Pancreas (tissue), 10 donors: ENCODE measurements at regions of chr3 and their contacts with region 1.

Region 1: GRCh38 chr3:124351430-124352148 is 359.7 kb upstream of the ROPN1 start:
- DNase-seq: peak in 3 of 6 donors; percentile 14 to 34 (median 26)
- ATAC-seq: peak; percentile 53 to 91 (median 87)
- H3K4me3 ChIP-seq: no peak overlapping the region
- H3K27ac ChIP-seq: no peak overlapping the region
- H3K4me1 ChIP-seq: no peaks in the 10 kb centered on the region
- H3K27me3 ChIP-seq: no peaks in the 10 kb centered on the region
- CTCF ChIP-seq: peak in 2 of 4 donors; percentile 25 to 29

Region 2: DNA sequence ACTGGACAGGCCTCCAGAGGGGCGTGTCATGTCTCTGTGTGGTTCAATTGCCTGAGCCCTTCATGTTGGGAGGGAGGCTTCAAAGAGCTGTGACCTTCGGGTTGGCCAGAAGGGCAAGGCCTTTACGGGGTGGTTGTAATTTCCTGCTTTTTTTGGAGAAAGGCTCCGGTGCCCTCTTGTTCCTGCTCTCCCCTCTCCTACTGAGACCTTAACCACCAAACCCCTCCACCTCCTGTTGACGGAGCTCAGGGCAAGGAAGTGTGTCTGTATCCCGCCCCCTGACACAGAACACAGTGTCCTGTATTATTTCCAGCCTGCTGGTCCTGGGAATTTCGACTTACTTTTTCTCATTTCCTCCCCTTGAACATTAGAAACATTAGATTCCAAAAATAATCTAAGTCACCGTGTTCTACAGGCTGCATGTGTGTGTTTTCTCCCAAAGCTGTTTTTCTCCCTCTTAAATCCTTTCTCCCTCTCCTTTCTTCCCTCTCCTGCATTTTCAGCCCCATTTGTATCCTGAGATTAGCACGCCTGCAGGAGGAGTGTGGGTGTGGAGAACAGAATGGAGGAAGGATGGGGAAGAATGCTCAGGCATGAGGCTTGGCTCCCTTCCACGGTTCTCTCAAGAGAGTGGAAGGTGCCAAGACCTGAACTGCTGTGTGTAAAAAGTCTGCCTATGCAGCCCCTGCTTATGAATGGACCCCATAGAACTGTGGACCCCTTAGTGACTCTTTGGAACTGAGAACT is 74.3 kb before region 1 on chr3:
- intact Hi-C with region 1: no loop called
- DNase-seq: no peak
- ATAC-seq: no peak
- H3K4me3 ChIP-seq: no peak overlapping the region
- H3K27ac ChIP-seq: peak overlapping the region in 3 of 4 donors; percentile 12 to 22 (median 14)
- H3K4me1 ChIP-seq: no peaks in the 10 kb centered on the region
- H3K27me3 ChIP-seq: no peaks in the 10 kb centered on the region
- CTCF ChIP-seq: no peak

Region 3: GRCh38 chr3:124467980-124468902 is 116.7 kb after region 1 on chr3:
- intact Hi-C with region 1: loop called in 1 of 3 experiments (anchors 10 kb)
- DNase-seq: peak in 5 of 6 donors; percentile 26 to 74 (median 59)
- ATAC-seq: peak; percentile 83 to 94 (median 90)
- H3K4me3 ChIP-seq: no peak overlapping the region
- H3K27ac ChIP-seq: no peak overlapping the region
- H3K4me1 ChIP-seq: peaks cover 0 to 7% (median 4%) of the 10 kb centered on the region in 3 donors
- H3K27me3 ChIP-seq: no peaks in the 10 kb centered on the region
- CTCF ChIP-seq: peak; percentile 77 to 94 (median 88)

Region 4: GRCh38 chr3:124552239-124552638 is 200.7 kb after region 1 on chr3:
- intact Hi-C with region 1: loop called in 1 of 3 experiments (anchors 5 kb)
- DNase-seq: peak in 5 of 6 donors; percentile 39 to 81 (median 64)
- ATAC-seq: peak; percentile 76 to 92 (median 88)
- H3K4me3 ChIP-seq: no peak overlapping the region
- H3K27ac ChIP-seq: peak overlapping the region in 1 of 4 donors; percentile 31
- H3K4me1 ChIP-seq: peaks cover 14 to 21% (median 19%) of the 10 kb centered on the region in 3 donors
- H3K27me3 ChIP-seq: no peaks in the 10 kb centered on the region
- CTCF ChIP-seq: no peak